ENCODE measurements at regions of chr1 and their contacts with region 1.

Region 1: GRCh38 chr1:193537266-193538002 is 351.0 kb upstream of the B3GALT2 start:
- DNase-seq: peak; percentile 25
- ATAC-seq: peak; percentile 95
- H3K4me3 Mint-ChIP-seq: peak overlapping the region; percentile 17
- H3K27ac Mint-ChIP-seq: peak overlapping the region; percentile 88
- H3K4me1 Mint-ChIP-seq: peaks cover 48% of the 10 kb centered on the region
- H3K27me3 Mint-ChIP-seq: no peaks in the 10 kb centered on the region
- CTCF ChIP-seq: no peak

Region 2: GRCh38 chr1:193059268-193060225 is 477.9 kb before region 1 on chr1 and contains the starts of genes RO60 and UCHL5:
- CTCF ChIA-PET with region 1: no interaction called
- POLR2A ChIA-PET with region 1: no interaction called
- intact Hi-C with region 1: loop called (anchors 10 kb)
- DNase-seq: peak; percentile 85
- ATAC-seq: peak; percentile 94
- H3K4me3 Mint-ChIP-seq: peak within 1 kb of the TSS; percentile 100
- H3K27ac Mint-ChIP-seq: peak within 1 kb of the TSS; percentile 99
- H3K4me1 Mint-ChIP-seq: peaks cover 54% of the 10 kb centered on the region
- H3K27me3 Mint-ChIP-seq: no peaks in the 10 kb centered on the region
- CTCF ChIP-seq: no peak
- total RNA-seq, gene RO60: 55.9 and 61.1 TPM in 2 replicates
- total RNA-seq, gene UCHL5: 32.3 and 36.4 TPM in 2 replicates

Region 3: DNA sequence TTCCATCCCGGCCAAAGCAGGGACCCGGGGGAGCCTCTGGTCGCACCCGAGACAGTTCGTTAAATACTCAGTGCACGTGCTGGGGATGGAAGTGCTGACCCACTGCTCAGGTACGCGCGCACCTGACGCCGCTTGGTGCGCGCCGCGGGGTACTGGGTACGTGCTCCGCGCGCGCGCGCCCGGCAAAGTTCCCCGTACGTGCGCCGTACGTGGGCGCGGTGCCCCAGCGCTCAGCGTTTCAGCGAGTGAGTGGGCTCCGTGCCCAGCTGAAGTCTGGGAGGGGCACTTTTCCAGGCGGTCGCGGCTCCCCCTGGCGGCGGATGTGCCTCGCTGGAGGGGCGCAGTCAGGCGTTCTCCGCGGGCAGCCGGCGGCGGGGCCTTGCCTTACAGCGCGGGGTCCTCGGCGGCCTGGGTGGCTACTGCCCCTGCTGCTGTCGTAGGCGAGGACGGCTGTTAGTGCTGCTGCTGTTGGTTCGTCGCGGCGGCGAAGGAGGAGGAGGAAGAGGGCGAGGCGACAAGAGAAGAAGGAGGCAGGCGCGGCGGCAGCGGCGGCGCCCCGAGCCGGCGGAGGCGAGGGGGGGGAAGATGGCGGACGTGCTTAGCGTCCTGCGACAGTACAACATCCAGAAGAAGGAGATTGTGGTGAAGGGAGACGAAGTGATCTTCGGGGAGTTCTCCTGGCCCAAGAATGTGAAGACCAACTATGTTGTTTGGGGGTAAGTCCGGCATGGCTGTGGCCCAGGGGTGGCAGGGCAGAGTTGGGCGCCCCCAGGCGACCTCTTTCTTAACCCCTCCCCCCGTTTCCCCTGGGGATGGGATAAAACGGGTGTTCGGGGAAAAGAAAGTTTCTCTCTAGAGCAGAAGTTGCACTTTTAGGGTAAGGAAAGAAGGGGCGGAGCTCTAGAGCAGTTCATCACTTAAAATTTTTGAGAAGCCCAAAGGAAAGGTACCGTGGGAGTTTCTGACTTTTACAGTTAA is 415.5 kb before region 1 on chr1 and contains the start of gene CDC73:
- CTCF ChIA-PET with region 1: no interaction called
- POLR2A ChIA-PET with region 1: no interaction called
- intact Hi-C with region 1: loop called (anchors 5 kb)
- DNase-seq: peak; percentile 99
- ATAC-seq: peak; percentile 90
- H3K4me3 Mint-ChIP-seq: peak within 1 kb of the TSS; percentile 93
- H3K27ac Mint-ChIP-seq: peak within 1 kb of the TSS; percentile 94
- H3K4me1 Mint-ChIP-seq: peaks cover 43% of the 10 kb centered on the region
- H3K27me3 Mint-ChIP-seq: no peaks in the 10 kb centered on the region
- CTCF ChIP-seq: peak; percentile 17
- total RNA-seq, gene CDC73: 55.9 and 59.1 TPM in 2 replicates

Region 4: GRCh38 chr1:193183019-193183627 is 354.3 kb before region 1 on chr1:
- CTCF ChIA-PET with region 1: no interaction called
- POLR2A ChIA-PET with region 1: no interaction called
- intact Hi-C with region 1: no loop called
- DNase-seq: no peak
- ATAC-seq: peak; percentile 61
- H3K4me3 Mint-ChIP-seq: no peak overlapping the region
- H3K27ac Mint-ChIP-seq: no peak overlapping the region
- H3K4me1 Mint-ChIP-seq: peaks cover 24% of the 10 kb centered on the region
- H3K27me3 Mint-ChIP-seq: no peaks in the 10 kb centered on the region
- CTCF ChIP-seq: peak; percentile 83

Region 5: DNA sequence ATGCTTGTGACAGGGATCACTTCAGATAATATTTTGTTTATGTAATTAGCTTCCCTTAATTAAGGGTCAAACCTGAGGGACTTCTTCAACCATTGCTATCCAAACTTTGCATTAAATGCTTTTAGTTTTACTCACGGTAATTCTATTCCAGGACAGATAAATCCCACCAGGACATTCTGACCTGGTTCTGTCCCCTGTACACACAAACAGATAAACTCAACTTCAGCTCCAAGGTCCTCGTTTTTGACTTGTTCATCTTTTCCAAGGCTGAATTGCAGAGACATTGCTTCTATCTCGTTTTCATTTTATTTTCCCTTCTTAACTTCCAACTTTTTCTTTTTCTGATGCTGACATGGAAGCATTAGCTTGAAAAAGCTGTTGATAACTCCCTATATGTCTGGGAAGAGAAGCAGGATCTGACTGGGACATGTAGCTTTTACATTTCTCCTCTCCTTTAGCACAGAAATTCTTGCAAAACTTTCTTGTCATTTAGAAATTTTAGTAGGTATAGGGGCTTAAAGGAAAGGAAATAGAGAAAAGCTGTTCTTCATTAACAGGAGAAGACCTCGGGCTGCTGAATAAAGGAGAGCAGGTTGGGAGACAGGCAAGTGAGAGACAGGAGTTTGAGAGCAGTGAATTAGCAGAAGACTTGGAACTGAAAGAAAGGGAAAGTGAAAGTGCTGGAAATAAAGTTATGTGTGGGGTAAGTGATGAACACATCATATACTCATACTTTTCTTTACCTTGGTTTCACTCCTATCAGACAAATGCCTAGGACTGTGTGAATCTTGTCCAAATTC is 119.3 kb before region 1 on chr1:
- CTCF ChIA-PET with region 1: interaction called, 3 read pairs
- POLR2A ChIA-PET with region 1: no interaction called
- intact Hi-C with region 1: loop called (anchors 5 kb)
- DNase-seq: no peak
- ATAC-seq: no peak
- H3K4me3 Mint-ChIP-seq: peak overlapping the region; percentile 75
- H3K27ac Mint-ChIP-seq: peak overlapping the region; percentile 48
- H3K4me1 Mint-ChIP-seq: peaks cover 21% of the 10 kb centered on the region
- H3K27me3 Mint-ChIP-seq: no peaks in the 10 kb centered on the region
- CTCF ChIP-seq: no peak

Region 6: GRCh38 chr1:193479187-193479586 is 58.2 kb before region 1 on chr1:
- CTCF ChIA-PET with region 1: no interaction called
- POLR2A ChIA-PET with region 1: no interaction called
- intact Hi-C with region 1: loop called (anchors 1 kb)
- DNase-seq: peak; percentile 19
- ATAC-seq: peak; percentile 91
- H3K4me3 Mint-ChIP-seq: peak overlapping the region; percentile 35
- H3K27ac Mint-ChIP-seq: peak overlapping the region; percentile 81
- H3K4me1 Mint-ChIP-seq: peaks cover 47% of the 10 kb centered on the region
- H3K27me3 Mint-ChIP-seq: no peaks in the 10 kb centered on the region
- CTCF ChIP-seq: no peak

Region 7: DNA sequence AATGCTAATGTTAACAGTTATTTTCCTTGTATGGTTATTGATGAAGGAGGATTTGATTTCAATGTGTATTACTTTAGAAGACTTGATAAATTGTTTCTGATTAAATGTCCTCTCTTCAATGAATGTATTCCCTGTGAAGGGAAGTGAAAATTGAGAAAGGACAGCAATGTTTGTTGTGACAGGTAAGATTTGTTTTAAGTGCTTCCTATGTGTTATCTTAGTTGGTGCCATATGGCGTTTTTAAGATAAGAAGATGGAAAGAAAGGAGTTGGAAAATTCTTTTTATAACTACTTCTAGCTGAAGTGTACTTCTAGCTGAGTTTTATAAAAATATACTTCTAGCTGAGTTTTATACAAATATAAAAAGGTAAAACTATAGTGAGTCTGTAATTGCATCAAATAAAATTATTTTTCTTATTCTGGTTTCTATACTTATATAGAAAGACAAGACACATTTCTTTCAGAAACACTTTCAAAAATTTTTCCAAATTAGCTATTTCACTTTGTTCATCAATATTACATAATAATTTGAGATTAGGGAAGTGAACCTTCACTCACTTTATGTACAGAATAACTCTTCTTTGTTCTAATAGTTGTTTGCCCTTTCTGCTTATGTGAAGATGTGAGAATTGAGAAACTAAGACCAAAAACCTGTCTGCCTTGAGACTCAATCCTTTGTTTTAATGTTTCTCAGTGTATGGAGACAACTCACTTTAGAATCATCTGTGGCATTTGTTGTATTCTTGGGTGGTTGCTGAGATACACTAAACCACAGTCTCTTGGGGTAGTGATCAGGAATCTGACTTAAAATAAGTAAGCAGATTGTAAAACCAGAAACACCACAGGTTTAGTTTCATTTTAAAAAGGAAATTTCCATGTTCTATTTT is 31.9 kb after region 1 on chr1:
- CTCF ChIA-PET with region 1: no interaction called
- POLR2A ChIA-PET with region 1: no interaction called
- intact Hi-C with region 1: loop called (anchors 2 kb)
- DNase-seq: no peak
- ATAC-seq: peak; percentile 28
- H3K4me3 Mint-ChIP-seq: no peak overlapping the region
- H3K27ac Mint-ChIP-seq: no peak overlapping the region
- H3K4me1 Mint-ChIP-seq: peaks cover 27% of the 10 kb centered on the region
- H3K27me3 Mint-ChIP-seq: no peaks in the 10 kb centered on the region
- CTCF ChIP-seq: no peak